MCF 10A (cell line): ENCODE measurements at regions of chr2 and their contacts with region 1.

Region 1: GRCh38 chr2:174039551-174040416 is 74.6 kb upstream of the SP3 start:
- DNase-seq: peak; percentile 96
- H3K4me3 Mint-ChIP-seq: peak overlapping the region; percentile 31
- H3K27ac Mint-ChIP-seq: peak overlapping the region; percentile 92
- H3K4me1 Mint-ChIP-seq: peaks cover 17% of the 10 kb centered on the region
- H3K27me3 Mint-ChIP-seq: no peaks in the 10 kb centered on the region
- CTCF ChIP-seq: peak; percentile 80

Region 2: GRCh38 chr2:173402405-173402974 is 637.3 kb before region 1 on chr2:
- CTCF ChIA-PET with region 1: interaction called, 6 read pairs
- POLR2A ChIA-PET with region 1: no interaction called
- intact Hi-C with region 1: loop called (anchors 10 kb)
- DNase-seq: peak; percentile 87
- H3K4me3 Mint-ChIP-seq: peak overlapping the region; percentile 6
- H3K27ac Mint-ChIP-seq: no peak overlapping the region
- H3K4me1 Mint-ChIP-seq: peaks cover 11% of the 10 kb centered on the region
- H3K27me3 Mint-ChIP-seq: peaks cover 64% of the 10 kb centered on the region
- CTCF ChIP-seq: peak; percentile 86

Region 3: GRCh38 chr2:173749315-173749714 is 290.5 kb before region 1 on chr2:
- CTCF ChIA-PET with region 1: no interaction called
- POLR2A ChIA-PET with region 1: no interaction called
- intact Hi-C with region 1: loop called (anchors 1 kb)
- DNase-seq: peak; percentile 44
- H3K4me3 Mint-ChIP-seq: no peak overlapping the region
- H3K27ac Mint-ChIP-seq: no peak overlapping the region
- H3K4me1 Mint-ChIP-seq: no peaks in the 10 kb centered on the region
- H3K27me3 Mint-ChIP-seq: no peaks in the 10 kb centered on the region
- CTCF ChIP-seq: peak; percentile 45

Region 4: GRCh38 chr2:173793709-173794565 is 245.8 kb before region 1 on chr2:
- CTCF ChIA-PET with region 1: no interaction called
- POLR2A ChIA-PET with region 1: no interaction called
- intact Hi-C with region 1: no loop called
- DNase-seq: no peak
- H3K4me3 Mint-ChIP-seq: no peak overlapping the region
- H3K27ac Mint-ChIP-seq: no peak overlapping the region
- H3K4me1 Mint-ChIP-seq: no peaks in the 10 kb centered on the region
- H3K27me3 Mint-ChIP-seq: peaks cover 28% of the 10 kb centered on the region
- CTCF ChIP-seq: no peak

Region 5: DNA sequence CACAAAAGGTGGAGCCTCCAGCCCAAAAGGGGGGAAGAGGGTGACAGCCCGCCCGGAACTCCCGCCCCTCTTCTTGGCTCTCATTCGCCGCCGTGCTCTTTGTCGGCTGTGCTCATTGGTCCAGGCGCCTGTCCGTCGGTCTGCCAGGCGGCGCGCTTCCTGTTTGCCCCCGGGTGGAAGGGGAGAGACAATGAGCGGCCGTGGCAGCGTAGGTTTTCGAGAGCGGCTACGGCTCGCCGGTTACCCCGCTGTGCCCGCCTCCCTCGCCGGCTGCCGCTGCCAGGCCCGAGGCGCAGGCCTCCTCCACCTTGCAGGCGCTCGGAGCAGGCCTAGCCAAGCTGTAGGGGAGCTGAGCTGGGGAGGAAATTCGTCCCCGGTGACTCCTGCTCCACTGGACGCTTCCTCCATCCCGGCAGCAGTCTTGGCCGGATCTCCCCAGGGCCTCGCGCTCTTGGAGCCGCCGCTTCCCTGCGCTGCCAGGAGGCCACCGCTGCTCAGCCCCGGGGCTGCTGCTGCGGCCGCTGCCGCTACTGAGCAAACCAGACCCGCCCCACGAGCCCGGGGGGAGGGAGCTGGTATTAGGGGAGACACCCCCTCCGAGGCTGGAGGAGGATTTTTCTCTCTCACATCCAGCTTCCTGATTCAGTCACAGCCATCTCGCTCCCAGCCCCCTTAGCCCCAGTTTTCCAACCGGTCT is 74.3 kb before region 1 on chr2 and contains the start of gene SP3:
- CTCF ChIA-PET with region 1: no interaction called
- POLR2A ChIA-PET with region 1: interaction called, 12 read pairs
- intact Hi-C with region 1: loop called (anchors 1 kb)
- DNase-seq: peak; percentile 97
- H3K4me3 Mint-ChIP-seq: peak within 1 kb of the TSS; percentile 87
- H3K27ac Mint-ChIP-seq: peak within 1 kb of the TSS; percentile 87
- H3K4me1 Mint-ChIP-seq: peaks cover 12% of the 10 kb centered on the region
- H3K27me3 Mint-ChIP-seq: no peaks in the 10 kb centered on the region
- CTCF ChIP-seq: no peak
- total RNA-seq, gene SP3: 62.1 and 73.8 TPM in 2 replicates

Region 6: DNA sequence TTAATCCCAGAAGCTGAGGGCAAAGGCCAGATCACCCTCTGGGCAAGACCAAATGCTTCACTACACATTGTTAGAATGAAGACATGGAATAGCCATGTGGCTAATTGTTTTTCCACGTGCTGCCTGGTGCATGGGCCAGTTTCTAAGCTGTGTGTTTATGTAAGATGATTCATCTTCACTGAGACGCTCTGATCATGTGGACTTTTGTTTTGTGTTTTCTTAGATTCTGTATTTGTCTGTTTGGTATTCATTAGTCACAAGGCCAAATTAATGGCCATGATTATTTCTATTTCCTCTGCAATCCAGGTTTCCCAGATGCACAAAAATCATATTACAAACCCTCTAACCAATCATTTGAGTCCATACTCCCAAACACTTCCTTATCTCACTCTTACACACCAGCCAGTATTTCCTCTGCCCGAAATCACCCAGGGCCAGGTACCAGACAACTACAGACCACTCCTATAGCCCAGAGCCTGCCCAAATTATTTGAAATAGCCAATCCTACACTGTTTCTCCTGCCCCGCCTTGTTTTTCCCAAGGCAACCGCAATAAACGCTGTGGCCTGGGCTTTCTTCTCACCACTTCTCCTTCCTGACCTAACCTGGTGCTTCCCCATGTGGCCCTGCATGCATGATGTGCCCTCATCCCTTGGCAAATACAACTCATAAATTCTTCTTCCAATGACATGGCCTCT is 19.5 kb after region 1 on chr2:
- CTCF ChIA-PET with region 1: interaction called, 4 read pairs
- POLR2A ChIA-PET with region 1: interaction called, 11 read pairs
- intact Hi-C with region 1: no loop called
- DNase-seq: peak; percentile 58
- H3K4me3 Mint-ChIP-seq: no peak overlapping the region
- H3K27ac Mint-ChIP-seq: peak overlapping the region; percentile 92
- H3K4me1 Mint-ChIP-seq: peaks cover 34% of the 10 kb centered on the region
- H3K27me3 Mint-ChIP-seq: no peaks in the 10 kb centered on the region
- CTCF ChIP-seq: no peak